ENCODE measurements at regions of chr4 and their contacts with region 1.

Region 1: GRCh38 chr4:102344954-102345794 is at the start of gene SLC39A8:
- DNase-seq: peak; percentile 44
- ATAC-seq: peak; percentile 90
- H3K4me3 ChIP-seq: peak within 1 kb of the TSS; percentile 52
- H3K27ac ChIP-seq: no peak within 1 kb of the TSS
- H3K4me1 ChIP-seq: no peaks in the 10 kb centered on the region
- H3K27me3 ChIP-seq: peaks cover 23% of the 10 kb centered on the region
- CTCF ChIP-seq: peak; percentile 59
- POLR2A ChIP-seq: no peak
- RAD21 ChIP-seq: peak; percentile 48
- total RNA-seq, gene SLC39A8: 0.18 and 0.28 TPM in 2 replicates

Region 2: DNA sequence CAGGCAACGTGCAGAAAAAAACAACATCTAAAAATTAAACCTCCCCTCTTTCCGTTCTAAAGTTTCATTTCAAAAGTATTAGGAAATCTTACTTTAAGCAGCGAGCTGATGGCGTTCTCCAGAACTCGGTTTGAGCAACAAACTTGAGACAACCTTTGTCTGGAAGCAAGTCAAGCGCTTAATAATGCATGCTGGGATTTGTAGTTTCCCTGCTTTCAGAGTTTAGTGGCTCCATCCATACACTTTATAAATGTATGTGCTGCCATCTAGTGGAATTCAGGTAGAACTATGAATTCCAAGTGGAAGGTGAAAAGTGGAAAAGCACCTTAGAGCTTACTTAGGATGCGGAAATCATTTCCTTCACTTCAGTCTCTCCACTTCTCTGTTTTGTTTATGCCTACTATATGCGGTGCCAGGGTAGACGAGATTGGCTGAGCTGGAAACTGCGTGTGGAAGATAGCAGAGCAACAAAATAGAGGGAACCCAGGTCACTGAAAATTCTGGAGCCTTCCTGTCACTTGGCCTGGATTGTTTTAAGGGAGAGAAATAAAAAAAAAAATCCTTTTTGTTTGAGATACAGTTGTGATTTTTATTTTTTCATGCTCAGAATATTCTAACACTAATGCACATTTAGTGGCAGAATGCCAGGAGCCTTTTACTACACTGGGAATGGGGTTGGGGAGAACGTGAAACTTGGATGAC is 754.7 kb after region 1 on chr4 and contains the start of gene BDH2:
- CTCF ChIA-PET with region 1: no interaction called
- POLR2A ChIA-PET with region 1: no interaction called
- dilution Hi-C with region 1: no loop called
- in situ Hi-C with region 1: no loop called
- intact Hi-C with region 1: loop called (anchors 10 kb)
- DNase-seq: peak; percentile 97
- ATAC-seq: peak; percentile 90
- H3K4me3 ChIP-seq: peak within 1 kb of the TSS; percentile 50
- H3K27ac ChIP-seq: peak within 1 kb of the TSS; percentile 96
- H3K4me1 ChIP-seq: peaks cover 7% of the 10 kb centered on the region
- H3K27me3 ChIP-seq: no peaks in the 10 kb centered on the region
- CTCF ChIP-seq: peak; percentile 85
- POLR2A ChIP-seq: no peak
- RAD21 ChIP-seq: peak; percentile 79
- total RNA-seq, gene BDH2: 36.4 and 52.2 TPM in 2 replicates

Measured in IMR-90 (cell line).